Mammary epithelial cell (primary cell): ENCODE measurements at regions of chr19 and their contacts with region 1.

Region 1: DNA sequence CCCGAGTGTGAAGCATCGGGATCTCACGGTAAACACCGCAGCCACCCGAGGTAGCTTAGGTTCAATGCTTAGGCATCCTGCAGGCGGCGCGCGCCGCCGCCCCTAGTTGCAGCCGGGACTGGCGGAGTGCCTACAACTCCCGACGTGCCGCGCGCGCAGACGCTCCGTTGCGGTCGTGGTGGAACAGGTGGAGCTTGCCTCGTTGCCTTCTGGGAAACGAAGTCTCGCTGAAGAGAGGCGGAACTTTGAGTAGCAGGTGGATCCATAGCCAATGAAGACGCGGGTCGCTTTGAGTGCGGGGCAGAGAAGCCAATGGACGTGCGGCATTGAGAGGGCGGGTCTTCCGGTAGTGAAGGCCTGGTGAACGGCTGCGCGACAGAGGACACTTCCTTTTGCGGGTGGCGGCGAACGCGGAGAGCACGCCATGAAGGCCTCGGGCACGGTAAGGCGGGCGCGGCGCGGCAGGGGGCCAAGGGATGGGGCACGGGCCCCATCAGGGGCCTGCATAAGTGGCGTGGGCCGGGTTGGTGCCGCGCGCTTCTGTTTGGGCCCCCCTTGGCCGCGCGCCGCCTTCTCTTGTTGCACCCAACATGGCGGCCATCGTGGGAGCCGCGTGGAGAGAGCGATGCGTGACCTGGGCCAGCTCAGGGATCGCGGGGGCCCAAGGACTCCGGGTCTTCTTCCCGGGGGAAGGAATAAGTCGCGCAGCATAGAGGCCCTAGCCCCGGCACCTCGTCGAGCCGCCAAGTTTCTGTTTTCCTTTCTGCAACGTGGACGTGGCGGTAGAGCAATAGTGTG is at the start of gene RPL18A:
- DNase-seq: peak; percentile 100
- H3K4me3 ChIP-seq: peak within 1 kb of the TSS; percentile 95 to 98 (median 97)
- H3K27ac ChIP-seq: peak within 1 kb of the TSS; percentile 84
- H3K4me1 ChIP-seq: peaks cover 8% of the 10 kb centered on the region
- H3K27me3 ChIP-seq: no peaks in the 10 kb centered on the region
- CTCF ChIP-seq: peak; percentile 58 to 95
- total RNA-seq, gene RPL18A: 1,272 to 2,030 TPM

Region 2: GRCh38 chr19:17579661-17580244 is 280.0 kb before region 1 on chr19:
- CTCF ChIA-PET with region 1: no interaction called
- dilution Hi-C with region 1: no loop called
- in situ Hi-C with region 1: no loop called
- intact Hi-C with region 1: loop called (anchors 10 kb)
- DNase-seq: peak; percentile 24
- H3K4me3 ChIP-seq: no peak overlapping the region
- H3K27ac ChIP-seq: no peak overlapping the region
- H3K4me1 ChIP-seq: no peaks in the 10 kb centered on the region
- H3K27me3 ChIP-seq: no peaks in the 10 kb centered on the region
- CTCF ChIP-seq: no peak

Region 3: DNA sequence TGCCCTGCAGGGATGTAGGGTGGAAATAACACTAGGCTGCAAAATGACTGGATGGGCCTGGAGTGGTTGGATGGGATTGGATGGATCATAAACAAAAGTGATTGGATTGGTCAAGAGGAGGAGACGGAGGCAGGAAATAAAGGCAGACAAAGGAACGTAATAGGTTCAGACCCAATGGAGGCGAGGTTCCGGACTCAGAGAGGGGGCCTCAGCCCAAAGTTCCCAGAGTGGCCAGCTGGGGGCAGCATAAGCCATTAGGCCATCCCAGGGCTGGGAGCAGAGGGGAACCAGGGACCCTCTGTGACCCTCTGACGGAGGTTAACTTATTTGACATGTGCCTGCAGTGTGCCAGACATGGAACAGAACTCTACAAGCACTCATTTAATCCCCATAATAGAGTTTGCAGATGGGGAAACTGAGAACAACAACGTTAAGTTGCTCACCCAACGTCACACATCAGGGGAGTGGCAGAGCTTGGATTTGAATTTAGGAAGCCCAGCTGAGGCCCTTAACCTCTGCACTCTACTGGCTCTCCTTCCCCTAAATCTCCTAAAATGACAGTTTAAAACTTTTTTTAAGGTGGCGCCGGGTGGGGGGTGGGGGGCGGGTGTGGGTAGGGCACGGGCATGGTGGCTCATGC is 155.8 kb before region 1 on chr19:
- CTCF ChIA-PET with region 1: no interaction called
- dilution Hi-C with region 1: no loop called
- in situ Hi-C with region 1: no loop called
- intact Hi-C with region 1: loop called (anchors 1 kb)
- DNase-seq: peak; percentile 32
- H3K4me3 ChIP-seq: no peak overlapping the region
- H3K27ac ChIP-seq: no peak overlapping the region
- H3K4me1 ChIP-seq: no peaks in the 10 kb centered on the region
- H3K27me3 ChIP-seq: no peaks in the 10 kb centered on the region
- CTCF ChIP-seq: peak; percentile 59 to 83

Region 4: GRCh38 chr19:17794731-17795536 is 64.8 kb before region 1 on chr19 and contains the start of gene B3GNT3:
- CTCF ChIA-PET with region 1: interaction called, 8 read pairs
- dilution Hi-C with region 1: no loop called
- in situ Hi-C with region 1: no loop called
- intact Hi-C with region 1: loop called (anchors 2 kb)
- DNase-seq: peak; percentile 60
- H3K4me3 ChIP-seq: peak within 1 kb of the TSS; percentile 46 to 61 (median 60)
- H3K27ac ChIP-seq: peak within 1 kb of the TSS; percentile 51
- H3K4me1 ChIP-seq: peaks cover 37% of the 10 kb centered on the region
- H3K27me3 ChIP-seq: no peaks in the 10 kb centered on the region
- CTCF ChIP-seq: no peak
- total RNA-seq, gene B3GNT3: 2.3 to 18.6 TPM

Region 5: GRCh38 chr19:17932485-17933338 is 73.0 kb after region 1 on chr19 and contains the start of gene CCDC124:
- CTCF ChIA-PET with region 1: interaction called, 39 read pairs
- dilution Hi-C with region 1: loop called (anchors 5 kb)
- in situ Hi-C with region 1: no loop called
- intact Hi-C with region 1: loop called (anchors 1 kb)
- DNase-seq: peak; percentile 90
- H3K4me3 ChIP-seq: peak within 1 kb of the TSS; percentile 92 to 96 (median 94)
- H3K27ac ChIP-seq: peak within 1 kb of the TSS; percentile 95
- H3K4me1 ChIP-seq: peaks cover 18% of the 10 kb centered on the region
- H3K27me3 ChIP-seq: no peaks in the 10 kb centered on the region
- CTCF ChIP-seq: peak; percentile 92 to 99
- total RNA-seq, gene CCDC124: 20.3 to 100 TPM